OCI-LY7 (cell line): ENCODE measurements at regions of chr13 and their contacts with region 1.

Region 1: GRCh38 chr13:50594276-50595051 is 249.0 kb downstream of the DLEU7 start:
- DNase-seq: peak; percentile 98
- H3K4me3 ChIP-seq: peak overlapping the region; percentile 50
- H3K27ac ChIP-seq: peak overlapping the region; percentile 98
- H3K4me1 ChIP-seq: peaks cover 84% of the 10 kb centered on the region
- CTCF ChIP-seq: no peak

Region 2: GRCh38 chr13:50081679-50082425 is 512.6 kb before region 1 on chr13:
- CTCF ChIA-PET with region 1: no interaction called
- POLR2A ChIA-PET with region 1: interaction called, 4 read pairs
- intact Hi-C with region 1: loop called (anchors 2 kb)
- DNase-seq: peak; percentile 98
- H3K4me3 ChIP-seq: peak overlapping the region; percentile 96
- H3K27ac ChIP-seq: peak overlapping the region; percentile 89
- H3K4me1 ChIP-seq: peaks cover 42% of the 10 kb centered on the region
- CTCF ChIP-seq: peak; percentile 63

Region 3: GRCh38 chr13:50512474-50513299 is 81.8 kb before region 1 on chr13:
- CTCF ChIA-PET with region 1: interaction called, 3 read pairs
- POLR2A ChIA-PET with region 1: interaction called, 11 read pairs
- intact Hi-C with region 1: loop called (anchors 1 kb)
- DNase-seq: peak; percentile 95
- H3K4me3 ChIP-seq: peak overlapping the region; percentile 65
- H3K27ac ChIP-seq: peak overlapping the region; percentile 98
- H3K4me1 ChIP-seq: peaks cover 78% of the 10 kb centered on the region
- CTCF ChIP-seq: peak; percentile 68

Region 4: DNA sequence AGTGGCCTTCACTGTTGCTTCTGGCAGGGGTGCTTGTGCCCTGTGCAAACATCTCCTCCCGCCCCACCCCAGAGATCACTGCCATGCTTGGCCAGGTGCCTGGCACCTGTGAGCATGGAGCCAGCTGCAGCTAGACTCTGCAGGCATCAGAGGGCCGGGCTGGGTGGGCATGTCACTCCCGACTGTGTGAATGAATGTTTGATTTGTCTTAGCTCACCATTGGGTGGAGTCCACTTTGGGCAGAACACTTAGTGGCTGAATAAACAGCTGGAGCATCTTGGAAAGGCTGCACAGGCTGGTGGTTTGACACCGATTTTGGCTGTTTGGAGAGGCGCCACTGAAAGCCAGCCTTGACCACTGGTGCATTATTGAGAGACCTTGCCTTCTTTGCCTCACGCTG is 18.3 kb before region 1 on chr13:
- CTCF ChIA-PET with region 1: no interaction called
- POLR2A ChIA-PET with region 1: interaction called, 12 read pairs
- intact Hi-C with region 1: no loop called
- DNase-seq: no peak
- H3K4me3 ChIP-seq: no peak overlapping the region
- H3K27ac ChIP-seq: no peak overlapping the region
- H3K4me1 ChIP-seq: peaks cover 2% of the 10 kb centered on the region
- CTCF ChIP-seq: no peak

Region 5: GRCh38 chr13:50801087-50801931 is 206.8 kb after region 1 on chr13:
- CTCF ChIA-PET with region 1: interaction called, 6 read pairs
- POLR2A ChIA-PET with region 1: no interaction called
- intact Hi-C with region 1: loop called (anchors 1 kb)
- DNase-seq: peak; percentile 90
- H3K4me3 ChIP-seq: no peak overlapping the region
- H3K27ac ChIP-seq: peak overlapping the region; percentile 2
- H3K4me1 ChIP-seq: peaks cover 35% of the 10 kb centered on the region
- CTCF ChIP-seq: peak; percentile 93

Region 6: GRCh38 chr13:50882816-50883435 is 288.5 kb after region 1 on chr13:
- CTCF ChIA-PET with region 1: no interaction called
- POLR2A ChIA-PET with region 1: no interaction called
- intact Hi-C with region 1: no loop called
- DNase-seq: no peak
- H3K4me3 ChIP-seq: no peak overlapping the region
- H3K27ac ChIP-seq: no peak overlapping the region
- H3K4me1 ChIP-seq: peaks cover 22% of the 10 kb centered on the region
- CTCF ChIP-seq: no peak